Cardiac septum (tissue), 1 donor: ENCODE measurements at regions of chr10 and their contacts with region 1.

Region 1: DNA sequence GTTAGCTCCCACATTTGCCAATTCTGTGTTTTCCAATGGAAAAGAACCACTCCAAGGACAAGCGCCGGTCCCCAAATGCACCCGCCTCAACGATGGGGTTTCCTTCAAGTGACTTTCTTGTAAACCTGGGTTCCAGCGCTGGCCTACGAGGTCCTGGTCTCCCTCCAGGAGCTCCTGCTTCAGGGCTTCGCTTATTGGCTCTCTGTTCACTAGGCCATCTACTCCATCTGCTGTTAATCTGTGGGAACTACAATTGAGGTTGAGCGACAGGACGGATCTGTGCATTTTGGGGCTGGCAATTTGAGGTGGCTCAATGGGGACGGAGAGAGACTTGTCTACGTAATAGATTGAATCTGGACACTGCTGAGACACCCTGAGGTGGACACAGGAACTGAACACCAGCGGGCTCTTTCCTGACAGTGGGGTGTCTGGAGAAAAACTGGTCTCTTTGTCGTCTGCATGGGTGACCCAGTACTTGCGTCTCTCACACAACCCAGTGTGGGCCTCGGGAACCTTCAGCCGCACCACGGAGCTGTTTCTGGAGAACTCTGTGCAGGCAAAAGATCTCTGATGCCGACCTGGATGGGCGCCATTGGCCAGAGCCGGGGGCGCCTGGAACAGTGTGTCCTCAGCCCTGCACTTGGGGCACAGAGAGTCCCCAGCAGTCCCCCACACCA is 115.9 kb upstream of the ADAM12 start:
- DNase-seq: no peak

Region 2: DNA sequence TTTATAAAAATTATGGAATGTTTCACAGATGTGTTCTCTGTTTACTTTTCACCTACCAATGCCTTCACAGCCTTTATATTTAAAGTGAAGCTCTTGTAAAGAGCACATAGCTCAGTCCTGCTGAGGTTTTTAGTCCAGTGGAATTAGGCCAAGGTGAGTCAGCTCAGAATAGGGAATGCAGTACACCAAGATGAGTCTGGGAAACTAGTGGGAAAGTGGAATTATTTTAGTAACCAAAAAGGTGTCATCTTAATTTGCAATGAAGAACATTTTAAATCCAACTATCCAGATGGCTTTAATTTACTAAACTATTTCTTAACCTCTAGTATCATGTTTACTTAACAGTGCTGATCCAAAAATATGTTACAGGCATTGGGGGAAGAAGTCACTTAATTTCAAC is 1107.5 kb before region 1 on chr10:
- intact Hi-C with region 1: no loop called
- DNase-seq: no peak

Region 3: GRCh38 chr10:125929618-125930017 is 574.6 kb before region 1 on chr10:
- intact Hi-C with region 1: loop called (anchors 5 kb)
- DNase-seq: no peak

Region 4: DNA sequence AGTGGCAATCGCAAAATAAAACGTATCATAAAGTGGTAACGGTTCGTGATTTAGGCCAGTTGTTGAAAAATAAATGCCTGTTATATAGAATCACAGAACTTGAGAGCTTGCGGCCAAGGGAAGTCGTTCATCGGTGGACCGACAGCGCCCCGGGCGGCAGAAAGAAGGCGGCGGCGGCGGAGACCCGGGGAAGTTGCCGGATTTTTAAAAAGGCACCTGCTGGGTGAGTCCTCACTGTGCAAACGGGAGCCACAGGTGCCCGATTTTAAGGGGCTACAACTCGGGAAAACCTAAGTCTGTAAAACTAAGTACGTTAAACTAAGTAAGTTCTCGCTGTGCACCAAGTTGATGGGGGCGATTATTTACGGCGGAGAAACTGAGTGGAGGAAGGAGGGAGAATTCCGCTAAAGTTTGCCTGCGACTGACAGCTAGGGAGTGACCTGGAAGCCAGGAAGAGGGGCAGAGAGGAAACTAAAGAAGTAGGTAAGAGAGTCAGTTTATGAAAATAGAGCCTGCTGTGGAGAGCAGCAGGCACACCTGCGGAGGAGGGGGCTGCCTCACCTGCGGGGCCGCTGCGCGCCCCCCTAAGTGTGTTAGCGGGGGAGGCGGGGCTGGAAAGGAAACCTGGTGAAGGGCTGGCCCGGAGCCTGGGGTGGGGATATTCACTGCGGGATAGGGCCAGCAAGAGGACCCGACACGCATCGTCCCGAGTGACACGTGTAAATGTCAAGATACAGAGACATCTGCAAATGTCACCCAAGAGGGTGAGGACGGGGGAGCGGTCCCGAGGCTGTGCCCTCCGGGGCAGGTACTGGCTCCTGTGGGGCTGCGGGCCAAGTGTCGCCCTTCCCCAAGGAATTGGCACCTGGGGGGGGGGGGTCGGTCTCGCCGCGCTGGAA is 116.9 kb before region 1 on chr10:
- intact Hi-C with region 1: loop called (anchors 5 kb)
- DNase-seq: no peak